Common myeloid progenitor, CD34-positive (primary cell): ENCODE measurements at regions of chr5 and their contacts with region 1.

Region 1: DNA sequence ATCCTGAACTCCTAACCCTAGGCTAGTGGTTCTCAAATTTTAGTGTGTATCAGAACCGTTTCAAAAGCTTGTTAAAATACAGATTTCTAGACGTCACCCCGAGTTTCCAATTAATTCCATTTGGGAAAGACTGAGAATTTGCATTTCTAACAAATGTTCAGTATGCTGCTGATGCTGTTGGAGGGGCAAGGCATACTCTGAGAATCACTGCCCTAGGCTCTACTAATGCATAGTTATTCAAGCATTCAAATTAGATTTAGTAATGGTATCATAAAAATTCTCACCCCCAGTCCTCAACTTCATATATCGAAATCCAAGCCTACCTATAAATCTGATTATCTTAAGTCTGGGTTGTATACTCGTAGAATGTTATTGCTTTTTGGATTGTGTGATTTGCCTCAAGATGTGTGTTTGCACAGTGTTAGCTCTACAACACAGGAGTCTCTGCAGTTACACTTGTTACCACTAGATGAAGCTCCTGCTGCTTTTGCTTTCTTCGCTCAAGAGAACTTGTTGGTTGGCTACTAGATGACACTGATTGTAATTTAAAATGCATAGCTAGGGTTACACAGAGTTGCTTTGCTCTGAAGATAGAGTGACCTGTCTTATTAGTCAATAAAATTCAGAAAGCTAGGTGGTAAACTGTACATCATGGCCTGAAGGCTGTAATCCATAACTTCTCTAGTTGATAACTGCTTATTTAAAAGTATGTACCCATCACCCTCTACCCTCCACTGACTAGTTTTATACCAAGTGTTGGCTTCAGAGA is 7.5 kb upstream of the ERAP2 start:
- DNase-seq: peak; percentile 64 to 81 (median 80)
- H3K4me3 ChIP-seq: no peak overlapping the region
- H3K27ac ChIP-seq: no peak overlapping the region
- H3K4me1 ChIP-seq: no peaks in the 10 kb centered on the region
- H3K27me3 ChIP-seq: no peaks in the 10 kb centered on the region

Region 2: DNA sequence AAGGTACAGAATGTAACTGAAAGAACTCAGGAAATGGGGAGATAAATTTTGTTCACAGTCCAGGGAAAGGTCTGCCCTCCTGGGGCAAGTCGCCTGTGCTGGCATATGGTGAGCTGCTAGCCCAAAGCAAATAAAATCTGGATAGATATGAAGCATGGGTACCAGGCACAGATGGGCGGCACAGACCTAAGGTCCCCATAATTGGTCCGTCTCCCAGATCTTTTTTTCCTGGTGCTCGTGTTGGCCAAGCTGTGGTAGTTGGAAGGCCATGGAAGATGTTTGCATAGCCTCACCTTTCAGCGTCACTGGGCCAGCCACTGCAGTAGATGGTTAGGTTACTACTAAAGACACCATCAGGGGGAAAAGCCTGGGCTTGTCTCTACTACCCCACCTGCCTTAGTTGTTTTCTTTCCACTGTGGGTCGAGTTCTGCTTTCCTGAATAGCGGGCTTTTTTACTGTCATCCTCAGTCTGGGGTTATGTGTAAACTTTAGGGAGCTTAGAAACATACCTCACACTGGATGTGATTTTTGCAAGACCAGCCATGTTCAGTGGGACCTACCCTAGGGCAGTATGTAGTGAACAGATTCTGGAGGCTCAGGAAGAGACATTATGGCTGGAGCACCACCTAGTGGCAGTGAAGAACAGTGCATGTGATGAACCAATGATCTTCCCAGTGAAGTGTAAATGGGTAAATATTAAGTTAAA is 1022.1 kb before region 1 on chr5:
- CTCF ChIA-PET with region 1: no interaction called
- POLR2A ChIA-PET with region 1: no interaction called
- DNase-seq: peak; percentile 71 to 85 (median 77)
- H3K4me3 ChIP-seq: no peak overlapping the region
- H3K27ac ChIP-seq: no peak overlapping the region
- H3K4me1 ChIP-seq: peaks cover 13 to 31% (median 26%) of the 10 kb centered on the region in 4 experiments
- H3K27me3 ChIP-seq: no peaks in the 10 kb centered on the region

Region 3: DNA sequence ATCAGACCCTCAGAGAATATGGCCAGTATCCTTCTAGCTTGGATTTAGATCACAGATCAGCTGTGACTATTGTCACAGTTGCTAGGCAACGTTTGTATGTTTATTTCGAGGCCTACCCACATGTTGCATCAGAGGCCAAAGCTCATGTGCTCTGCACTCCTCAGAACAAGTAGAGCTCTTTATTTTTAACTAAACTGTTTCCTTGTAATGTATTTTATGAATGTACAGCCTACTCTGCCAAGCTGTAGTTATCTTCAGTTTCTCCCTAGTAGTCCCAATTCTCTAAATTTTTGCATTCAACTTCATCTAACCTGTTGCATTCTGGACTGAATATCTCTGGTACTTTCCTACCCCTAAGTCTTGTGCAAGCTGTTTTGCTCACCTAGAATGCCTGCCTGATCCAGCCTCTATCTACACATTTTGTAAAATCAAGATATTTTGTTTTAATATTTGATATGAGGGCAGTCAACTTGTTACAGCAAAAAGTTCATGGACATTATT is 153.8 kb before region 1 on chr5:
- CTCF ChIA-PET with region 1: no interaction called
- POLR2A ChIA-PET with region 1: no interaction called
- DNase-seq: peak; percentile 77 to 94 (median 91)
- H3K4me3 ChIP-seq: peak overlapping the region in 1 of 7 experiments; percentile 19
- H3K27ac ChIP-seq: peak overlapping the region; percentile 29 to 83
- H3K4me1 ChIP-seq: peaks cover 0 to 17% (median 10%) of the 10 kb centered on the region in 4 experiments
- H3K27me3 ChIP-seq: no peaks in the 10 kb centered on the region

Region 4: DNA sequence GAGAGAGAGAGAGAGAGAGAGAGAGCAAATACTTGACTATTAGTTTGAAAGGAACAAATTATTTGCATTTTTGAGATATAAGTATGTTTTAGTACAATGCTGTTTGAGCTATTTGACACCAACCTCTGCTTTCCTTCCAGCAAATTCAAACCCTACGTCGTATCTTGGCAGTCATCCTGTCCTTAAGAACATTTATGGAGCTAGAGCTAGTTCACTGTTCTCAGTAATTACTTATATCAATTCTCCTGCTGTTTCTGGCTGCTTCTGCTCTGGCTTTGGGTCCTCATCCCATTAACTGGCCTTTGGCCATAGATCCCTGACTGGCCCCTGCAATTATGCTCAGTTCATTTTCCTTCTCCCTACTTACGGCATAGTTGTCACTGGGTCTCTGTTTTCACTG is 12.4 kb before region 1 on chr5:
- CTCF ChIA-PET with region 1: interaction called, 10 read pairs
- POLR2A ChIA-PET with region 1: no interaction called
- DNase-seq: no peak
- H3K4me3 ChIP-seq: no peak overlapping the region
- H3K27ac ChIP-seq: no peak overlapping the region
- H3K4me1 ChIP-seq: peaks cover 0 to 6% (median 3%) of the 10 kb centered on the region in 4 experiments
- H3K27me3 ChIP-seq: no peaks in the 10 kb centered on the region

Region 5: GRCh38 chr5:96997265-96997859 is 128.6 kb after region 1 on chr5:
- CTCF ChIA-PET with region 1: interaction called, 23 read pairs
- POLR2A ChIA-PET with region 1: no interaction called
- DNase-seq: peak; percentile 69 to 83 (median 82)
- H3K4me3 ChIP-seq: no peak overlapping the region
- H3K27ac ChIP-seq: no peak overlapping the region
- H3K4me1 ChIP-seq: no peaks in the 10 kb centered on the region
- H3K27me3 ChIP-seq: no peaks in the 10 kb centered on the region

Region 6: GRCh38 chr5:97142521-97143254 is 273.9 kb after region 1 on chr5 and contains the start of gene LIX1:
- CTCF ChIA-PET with region 1: interaction called, 16 read pairs
- POLR2A ChIA-PET with region 1: interaction called, 5 read pairs
- DNase-seq: peak; percentile 40 to 63 (median 53)
- H3K4me3 ChIP-seq: no peak within 1 kb of the TSS
- H3K27ac ChIP-seq: no peak within 1 kb of the TSS
- H3K4me1 ChIP-seq: no peaks in the 10 kb centered on the region
- H3K27me3 ChIP-seq: no peaks in the 10 kb centered on the region